PC-3 (cell line): ENCODE measurements at regions of chr20 and their contacts with region 1.

Region 1: GRCh38 chr20:32483351-32484224 is 101.5 kb downstream of the NOL4L start:
- DNase-seq: peak; percentile 65
- ATAC-seq: peak; percentile 62
- H3K4me3 ChIP-seq: peak overlapping the region; percentile 85
- H3K27ac ChIP-seq: peak overlapping the region; percentile 20; the same call in 1 of the 2 replicates
- H3K4me1 ChIP-seq: peaks cover 11% of the 10 kb centered on the region
- H3K27me3 ChIP-seq: no peaks in the 10 kb centered on the region
- CTCF ChIP-seq: no peak

Region 2: GRCh38 chr20:32773855-32774254 is 290.3 kb after region 1 on chr20:
- CTCF ChIA-PET with region 1: no interaction called
- POLR2A ChIA-PET with region 1: interaction called, 28 read pairs
- intact Hi-C with region 1: no loop called
- DNase-seq: no peak
- ATAC-seq: no peak
- H3K4me3 ChIP-seq: no peak overlapping the region
- H3K27ac ChIP-seq: no peak overlapping the region
- H3K4me1 ChIP-seq: peaks cover 14% of the 10 kb centered on the region
- H3K27me3 ChIP-seq: no peaks in the 10 kb centered on the region
- CTCF ChIP-seq: no peak

Region 3: GRCh38 chr20:34268851-34269636 is 1785.5 kb after region 1 on chr20:
- CTCF ChIA-PET with region 1: no interaction called
- POLR2A ChIA-PET with region 1: interaction called, 14 read pairs
- intact Hi-C with region 1: no loop called
- DNase-seq: no peak
- ATAC-seq: no peak
- H3K4me3 ChIP-seq: no peak overlapping the region
- H3K27ac ChIP-seq: no peak overlapping the region
- H3K4me1 ChIP-seq: no peaks in the 10 kb centered on the region
- H3K27me3 ChIP-seq: no peaks in the 10 kb centered on the region
- CTCF ChIP-seq: no peak